Activated T-helper 1 cell treated with anti-CD3 and anti-CD28 coated beads, Interleukin-12 subunit alpha, Interleukin-12 subunit beta, Interleukin-2, Interleukin-4 antibody, amounts not matched to agents 30 ng/mL and 10 ng/mL and 1 ng/mL, durations not matched to agents 14 hours and 24 hours and 36 hours (primary cell): ENCODE measurements at regions of chr1 and their contacts with region 1.

Region 1: DNA sequence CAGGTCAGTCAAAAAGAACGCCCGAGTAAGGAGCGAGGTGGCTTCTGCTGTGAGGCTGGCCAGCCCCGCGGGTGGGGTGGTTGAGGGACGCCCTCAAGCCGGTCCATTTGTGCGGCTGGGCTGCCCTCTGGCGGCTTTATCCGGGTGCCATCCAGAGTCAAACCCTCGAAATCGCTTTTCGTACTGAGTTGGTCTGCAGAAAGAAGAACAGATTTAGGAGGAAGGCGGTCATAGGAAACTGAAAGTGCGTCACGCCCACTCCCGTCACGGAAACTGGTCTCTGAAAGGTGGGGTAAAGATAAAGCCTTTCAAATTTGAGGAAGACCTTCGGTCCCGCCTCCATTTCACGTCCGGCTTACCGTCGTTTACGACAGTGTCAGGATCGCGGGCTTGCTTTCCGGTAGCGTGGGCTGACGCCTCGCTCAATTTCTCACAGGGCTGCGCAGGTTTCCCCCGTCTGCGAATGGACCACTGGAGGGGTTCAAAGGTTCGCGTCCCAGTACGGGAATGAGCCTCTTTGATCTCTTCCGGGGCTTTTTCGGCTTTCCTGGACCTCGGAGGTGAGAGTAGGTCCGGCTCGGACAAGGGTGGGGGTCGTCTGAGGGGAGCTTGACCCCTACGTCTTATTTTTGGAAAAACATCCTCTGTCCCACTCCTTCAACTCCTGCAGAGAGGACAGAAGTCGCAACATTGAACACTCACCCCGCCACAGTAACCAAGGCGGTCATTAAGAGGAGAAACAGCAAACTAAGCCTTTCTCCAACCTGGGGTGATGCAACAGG is at the start of gene HAX1:
- DNase-seq: peak; percentile 94
- H3K4me3 Mint-ChIP-seq: peak within 1 kb of the TSS; percentile 98
- H3K27ac Mint-ChIP-seq: peak within 1 kb of the TSS; percentile 97
- H3K4me1 Mint-ChIP-seq: peaks cover 46% of the 10 kb centered on the region
- H3K27me3 Mint-ChIP-seq: no peaks in the 10 kb centered on the region
- total RNA-seq, gene HAX1: 122 and 123 TPM in 2 replicates

Region 2: GRCh38 chr1:153790966-153791647 is 481.3 kb before region 1 on chr1:
- intact Hi-C with region 1: loop called (anchors 5 kb)
- DNase-seq: peak; percentile 19
- H3K4me3 Mint-ChIP-seq: peak overlapping the region; percentile 5
- H3K27ac Mint-ChIP-seq: peak overlapping the region; percentile 69
- H3K4me1 Mint-ChIP-seq: peaks cover 32% of the 10 kb centered on the region
- H3K27me3 Mint-ChIP-seq: peaks cover 16% of the 10 kb centered on the region

Region 3: DNA sequence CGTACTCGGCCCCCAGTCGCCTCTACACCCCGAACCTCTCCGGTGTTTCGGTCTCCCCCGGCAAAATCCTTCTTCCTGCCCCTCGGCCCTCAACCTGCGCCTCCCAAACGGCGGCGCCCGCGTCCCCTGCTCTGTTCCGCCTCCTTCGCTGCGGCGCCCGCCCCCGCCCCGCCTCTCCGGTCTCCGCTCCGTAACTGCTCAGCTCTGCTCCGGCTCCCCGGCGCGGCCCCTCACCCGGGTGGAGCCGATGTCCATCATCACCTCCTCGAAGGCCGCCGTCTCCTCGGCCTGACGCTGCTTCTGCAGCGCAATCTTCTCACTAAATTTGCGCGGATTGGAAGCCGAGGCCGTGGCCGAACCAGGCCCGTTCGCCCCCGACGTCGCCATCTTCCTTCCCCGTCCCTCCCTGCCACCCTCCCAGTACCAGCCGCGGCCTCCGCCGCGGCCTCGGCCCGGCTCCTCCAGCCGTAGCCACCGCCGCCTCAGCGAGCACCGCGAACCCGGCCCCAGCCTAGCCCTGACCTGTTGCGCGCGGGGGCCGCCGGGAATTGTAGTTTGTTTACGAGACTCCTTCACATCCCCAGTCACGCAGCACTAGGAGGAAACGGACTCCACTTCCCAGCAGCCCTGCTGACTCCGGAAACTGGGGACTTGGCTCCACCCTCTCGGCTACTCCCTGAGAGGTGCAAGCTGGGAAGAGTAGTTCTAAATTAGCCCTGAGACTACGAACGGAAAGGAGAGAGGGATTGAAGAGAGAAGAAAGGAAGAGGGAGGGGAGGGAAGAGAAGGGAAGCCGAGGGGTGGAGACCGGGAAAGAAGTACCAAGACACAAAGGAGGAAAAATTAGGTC is 314.1 kb before region 1 on chr1 and contains the start of gene CRTC2:
- intact Hi-C with region 1: loop called (anchors 2 kb)
- DNase-seq: peak; percentile 96
- H3K4me3 Mint-ChIP-seq: peak within 1 kb of the TSS; percentile 97
- H3K27ac Mint-ChIP-seq: peak within 1 kb of the TSS; percentile 81
- H3K4me1 Mint-ChIP-seq: peaks cover 65% of the 10 kb centered on the region
- H3K27me3 Mint-ChIP-seq: no peaks in the 10 kb centered on the region
- total RNA-seq, gene CRTC2: 62.8 and 76.4 TPM in 2 replicates

Region 4: GRCh38 chr1:154198756-154199562 is 73.4 kb before region 1 on chr1:
- intact Hi-C with region 1: loop called (anchors 1 kb)
- DNase-seq: no peak
- H3K4me3 Mint-ChIP-seq: no peak overlapping the region
- H3K27ac Mint-ChIP-seq: no peak overlapping the region
- H3K4me1 Mint-ChIP-seq: no peaks in the 10 kb centered on the region
- H3K27me3 Mint-ChIP-seq: peaks cover 6% of the 10 kb centered on the region

Region 5: DNA sequence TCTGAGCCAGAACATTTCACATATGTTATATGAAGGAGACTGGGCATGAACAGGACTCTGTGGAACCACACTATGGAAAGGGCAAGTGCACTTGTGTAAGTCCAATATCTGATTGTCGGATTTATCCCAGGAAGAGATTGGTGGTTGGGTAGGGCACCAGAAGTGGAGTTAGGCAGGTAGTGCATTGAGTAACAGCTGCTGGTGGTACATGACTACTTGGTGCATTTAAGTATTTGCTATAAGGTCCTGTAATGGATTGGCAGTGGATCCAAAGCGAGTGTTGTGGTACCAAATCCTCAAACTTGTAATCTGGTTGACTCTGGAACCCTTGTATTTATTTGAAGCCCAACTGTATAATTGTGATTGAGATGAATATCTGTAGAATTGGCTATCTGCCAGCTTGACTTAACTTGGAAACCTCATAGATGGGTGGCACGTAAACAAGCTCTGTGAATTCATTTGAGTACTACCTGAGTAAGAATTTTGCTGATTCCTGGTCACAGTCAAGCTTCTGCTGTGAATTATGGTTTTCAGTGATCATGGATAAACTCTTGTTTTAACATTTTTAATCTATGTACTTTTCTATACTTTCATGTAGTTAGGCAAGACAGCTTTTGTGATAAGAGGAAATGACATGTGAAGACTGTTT is 30.6 kb before region 1 on chr1:
- intact Hi-C with region 1: no loop called
- DNase-seq: no peak
- H3K4me3 Mint-ChIP-seq: no peak overlapping the region
- H3K27ac Mint-ChIP-seq: peak overlapping the region; percentile 35
- H3K4me1 Mint-ChIP-seq: peaks cover 33% of the 10 kb centered on the region
- H3K27me3 Mint-ChIP-seq: no peaks in the 10 kb centered on the region

Region 6: DNA sequence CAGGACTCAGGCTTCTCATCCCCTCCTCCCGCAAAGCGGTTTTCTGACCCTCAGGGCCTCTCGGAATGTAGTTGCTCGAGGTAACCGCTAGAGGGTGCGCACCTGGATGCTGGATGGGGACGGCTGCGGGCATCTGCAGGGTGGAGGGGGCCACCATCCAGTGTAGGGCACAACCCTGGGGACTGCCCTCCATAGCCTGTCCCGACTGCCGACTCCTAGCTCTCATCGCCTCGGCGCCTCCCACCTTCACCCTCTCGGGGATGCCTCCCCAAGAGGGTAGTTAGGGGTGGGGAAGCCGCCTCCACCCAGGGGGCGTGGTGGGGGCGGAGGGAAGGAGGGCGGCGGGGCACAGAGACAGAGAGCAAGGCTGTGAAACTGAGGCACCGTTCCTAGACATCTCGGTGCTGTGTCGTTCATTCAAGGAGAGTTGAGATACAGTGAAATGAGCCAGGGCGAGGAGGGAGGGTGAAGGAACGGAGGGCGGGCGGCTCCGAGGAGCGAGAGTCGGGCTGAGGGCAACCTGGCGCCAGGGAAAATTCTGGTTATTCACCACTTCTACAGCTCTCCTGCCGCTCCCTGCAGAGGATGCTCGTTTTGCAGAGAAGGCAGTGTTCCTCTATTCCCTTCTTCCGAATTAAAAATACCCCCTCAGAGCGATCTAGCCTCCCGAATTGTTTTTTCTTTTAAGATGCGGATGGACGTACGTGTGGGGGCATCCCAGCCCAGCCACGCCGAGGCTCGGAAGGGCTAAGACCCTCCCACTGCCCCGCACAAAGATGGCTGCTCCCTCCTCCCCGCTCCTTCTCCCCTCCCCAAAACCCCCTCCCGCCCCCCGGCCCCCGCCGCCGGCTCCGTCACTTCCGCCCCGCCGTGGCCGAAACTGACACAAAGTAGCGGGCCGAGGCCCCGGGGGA is 52.5 kb after region 1 on chr1 and contains the start of gene ATP8B2:
- intact Hi-C with region 1: loop called (anchors 2 kb)
- DNase-seq: peak; percentile 74
- H3K4me3 Mint-ChIP-seq: peak within 1 kb of the TSS; percentile 96
- H3K27ac Mint-ChIP-seq: peak within 1 kb of the TSS; percentile 89
- H3K4me1 Mint-ChIP-seq: peaks cover 35% of the 10 kb centered on the region
- H3K27me3 Mint-ChIP-seq: peaks cover 22% of the 10 kb centered on the region
- total RNA-seq, gene ATP8B2: 50.1 and 54.9 TPM in 2 replicates

Region 7: GRCh38 chr1:154335025-154335714 is 62.8 kb after region 1 on chr1:
- intact Hi-C with region 1: loop called (anchors 2 kb)
- DNase-seq: peak; percentile 78
- H3K4me3 Mint-ChIP-seq: no peak overlapping the region
- H3K27ac Mint-ChIP-seq: peak overlapping the region; percentile 75
- H3K4me1 Mint-ChIP-seq: peaks cover 65% of the 10 kb centered on the region
- H3K27me3 Mint-ChIP-seq: no peaks in the 10 kb centered on the region